ENCODE measurements at regions of chr1 and their contacts with region 1.

Region 1: GRCh38 chr1:2985067-2985561 is 36.2 kb upstream of the ACTRT2 start:
- DNase-seq: peak in 9 of 10 donors; percentile 57 to 86 (median 64)
- H3K4me3 ChIP-seq: no peak overlapping the region
- H3K27ac ChIP-seq: peak overlapping the region in 58 of 59 donors; percentile 26 to 99 (median 92)
- H3K27me3 ChIP-seq: peaks cover 0 to 4% (median 0%) of the 10 kb centered on the region in 45 donors
- CTCF ChIP-seq: peak in 1 of 56 donors; percentile 11

Region 2: DNA sequence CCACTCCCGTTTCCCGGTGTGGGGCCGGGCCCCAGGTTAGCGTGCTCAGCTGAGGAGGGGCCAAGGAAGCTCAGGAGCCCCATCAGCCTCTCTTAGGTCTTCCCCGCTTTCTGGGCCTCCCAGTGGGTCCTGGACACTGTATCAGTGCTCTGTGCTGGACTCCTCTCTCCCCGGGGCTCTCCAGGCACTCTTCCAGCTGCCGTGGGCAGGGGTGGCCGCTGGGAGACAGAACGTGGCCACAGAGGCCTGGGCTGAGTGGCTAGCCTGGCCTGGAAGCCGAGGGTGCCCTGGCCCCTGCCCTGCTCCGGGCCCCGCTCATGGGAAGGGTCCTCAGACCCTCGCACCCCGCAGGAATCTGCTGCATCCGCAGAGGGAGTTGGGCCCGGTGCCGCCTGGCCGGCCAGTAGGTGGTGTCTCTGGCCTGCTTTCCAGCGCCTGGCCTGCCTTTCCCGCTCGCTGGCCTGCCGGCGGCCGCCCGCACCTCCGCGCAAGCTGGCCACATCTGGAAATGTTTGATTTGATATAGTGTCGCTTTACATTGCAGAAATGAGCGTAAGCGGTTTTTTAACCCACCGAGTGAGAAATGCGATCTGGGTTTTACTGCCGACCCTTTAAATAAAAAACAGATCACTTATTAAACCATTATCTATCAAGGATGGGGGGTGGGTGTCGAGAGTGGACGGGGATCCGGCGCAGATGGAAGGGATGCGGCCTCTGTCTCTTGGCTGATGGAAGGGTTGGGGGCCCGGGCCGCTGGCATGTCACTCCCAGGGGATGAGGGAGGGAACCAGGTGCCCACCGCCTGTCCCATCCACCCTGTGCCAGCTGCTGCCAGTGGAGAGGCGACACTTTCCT is 109.2 kb before region 1 on chr1:
- intact Hi-C with region 1: no loop called
- DNase-seq: peak in 6 of 10 donors; percentile 30 to 75 (median 55)
- H3K4me3 ChIP-seq: no peak overlapping the region
- H3K27ac ChIP-seq: no peak overlapping the region
- H3K27me3 ChIP-seq: peaks cover 0 to 13% (median 0%) of the 10 kb centered on the region in 45 donors
- CTCF ChIP-seq: peak in 54 of 56 donors; percentile 43 to 88 (median 70)

Region 3: DNA sequence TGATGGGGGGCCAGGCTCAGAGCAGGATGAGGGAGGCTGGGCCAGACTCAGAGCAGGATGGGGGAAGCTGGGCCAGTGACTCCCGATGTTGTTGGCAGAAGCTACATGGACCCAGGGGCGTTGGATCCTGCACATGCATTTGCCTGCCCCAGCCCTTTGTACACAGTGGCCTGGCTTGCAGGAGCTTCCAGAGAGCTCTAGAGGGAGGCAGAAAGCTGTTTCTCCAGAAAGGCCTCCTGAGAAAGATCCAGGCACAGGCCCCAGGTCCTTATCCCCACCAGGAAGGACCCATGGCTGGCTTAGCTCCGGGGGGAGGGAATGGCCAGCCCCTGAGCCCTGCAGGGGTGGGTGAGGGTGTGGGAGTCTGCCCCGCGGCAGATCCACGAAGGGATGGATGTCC is 70.4 kb before region 1 on chr1:
- intact Hi-C with region 1: loop called in 1 of 2 experiments (anchors 10 kb)
- DNase-seq: peak in 6 of 10 donors; percentile 38 to 54 (median 47)
- H3K4me3 ChIP-seq: no peak overlapping the region
- H3K27ac ChIP-seq: peak overlapping the region in 11 of 59 donors; percentile 8 to 57 (median 30)
- H3K27me3 ChIP-seq: no peaks in the 10 kb centered on the region
- CTCF ChIP-seq: peak in 47 of 56 donors; percentile 14 to 65 (median 40)

Region 4: GRCh38 chr1:2968471-2968881 is 16.6 kb before region 1 on chr1:
- intact Hi-C with region 1: loop called in 1 of 2 experiments (anchors 2 kb)
- DNase-seq: peak; percentile 13 to 91 (median 83)
- H3K4me3 ChIP-seq: peak overlapping the region in 15 of 59 donors; percentile 9 to 39 (median 15)
- H3K27ac ChIP-seq: peak overlapping the region; percentile 79 to 100 (median 96)
- H3K27me3 ChIP-seq: peaks cover 0 to 4% (median 0%) of the 10 kb centered on the region in 45 donors
- CTCF ChIP-seq: peak in 5 of 56 donors; percentile 9 to 36 (median 25)

Measured in dorsolateral prefrontal cortex (tissue), 120 donors.